ENCODE measurements at regions of chr4 and their contacts with region 1.

Region 1: DNA sequence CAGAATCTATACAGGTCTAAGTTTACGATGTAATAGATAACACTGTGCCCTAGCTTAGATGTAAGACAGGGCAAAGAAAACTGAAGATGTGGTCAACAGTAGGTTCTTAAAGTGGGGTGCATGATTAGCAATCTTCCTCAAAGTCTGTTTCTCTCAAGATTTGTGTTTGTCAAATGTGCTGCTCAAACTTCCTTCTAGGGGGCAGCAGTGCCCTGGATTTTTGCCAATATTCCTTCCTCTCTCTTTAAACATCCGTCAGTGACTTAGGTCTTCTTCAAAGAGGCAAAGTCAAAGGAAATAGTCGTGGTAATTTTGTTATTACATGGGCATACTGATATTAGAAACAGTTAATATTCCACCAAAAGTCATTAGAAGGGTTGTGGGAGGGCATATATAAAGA is 4.2 kb upstream of the PDHA2 start:
- DNase-seq: no peak
- H3K4me3 ChIP-seq: no peak overlapping the region
- H3K27ac ChIP-seq: no peak overlapping the region
- H3K4me1 ChIP-seq: peaks cover 0 to 15% (median 3%) of the 10 kb centered on the region in 4 experiments; a peak in 4 of 7 replicates
- H3K27me3 ChIP-seq: no peaks in the 10 kb centered on the region
- CTCF ChIP-seq: peak in 2 of 3 experiments; percentile 63 to 80; a peak in 3 of 4 replicates
- EP300 ChIP-seq: no peak
- POLR2A ChIP-seq: no peak
- RAD21 ChIP-seq: peak; percentile 84 to 85

Region 2: DNA sequence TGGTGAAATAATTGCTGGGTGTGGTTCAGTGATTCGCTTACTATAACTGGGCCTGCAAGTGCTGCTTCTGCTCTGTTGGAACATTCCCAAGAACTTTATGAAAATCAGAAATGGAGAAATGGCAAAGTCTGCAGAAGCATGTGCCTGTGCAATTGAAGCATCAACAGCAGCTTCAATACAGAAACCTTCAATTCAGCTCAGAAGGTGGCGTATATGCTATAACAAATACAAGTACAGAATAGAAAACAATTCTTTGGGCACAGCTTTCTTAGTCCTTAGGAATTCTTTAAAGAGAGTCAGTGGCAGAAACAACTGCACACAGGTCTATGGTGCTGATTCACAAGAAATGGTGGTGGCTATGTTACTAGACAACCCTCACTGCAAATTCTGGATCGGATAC is 13.8 kb before region 1 on chr4:
- CTCF ChIA-PET with region 1: interaction called, 13 read pairs
- POLR2A ChIA-PET with region 1: no interaction called
- DNase-seq: no peak
- H3K4me3 ChIP-seq: no peak overlapping the region
- H3K27ac ChIP-seq: no peak overlapping the region
- H3K4me1 ChIP-seq: peaks cover 0 to 3% (median 0%) of the 10 kb centered on the region in 4 experiments; a peak in 2 of 7 replicates
- H3K27me3 ChIP-seq: no peaks in the 10 kb centered on the region
- CTCF ChIP-seq: no peak
- EP300 ChIP-seq: no peak
- POLR2A ChIP-seq: no peak
- RAD21 ChIP-seq: no peak

Region 3: GRCh38 chr4:96003951-96004740 is 168.5 kb after region 1 on chr4:
- CTCF ChIA-PET with region 1: no interaction called
- POLR2A ChIA-PET with region 1: no interaction called
- DNase-seq: no peak
- H3K4me3 ChIP-seq: no peak overlapping the region
- H3K27ac ChIP-seq: no peak overlapping the region
- H3K4me1 ChIP-seq: no peaks in the 10 kb centered on the region
- H3K27me3 ChIP-seq: no peaks in the 10 kb centered on the region
- CTCF ChIP-seq: no peak
- EP300 ChIP-seq: no peak
- POLR2A ChIP-seq: no peak
- RAD21 ChIP-seq: no peak

Region 4: GRCh38 chr4:96352051-96352517 is 516.4 kb after region 1 on chr4:
- CTCF ChIA-PET with region 1: interaction called, 10 read pairs
- POLR2A ChIA-PET with region 1: no interaction called
- DNase-seq: peak in 1 of 2 experiments; percentile 48
- H3K4me3 ChIP-seq: no peak overlapping the region
- H3K27ac ChIP-seq: no peak overlapping the region
- H3K4me1 ChIP-seq: peaks cover 0 to 3% (median 0%) of the 10 kb centered on the region in 4 experiments; a peak in 1 of 7 replicates
- H3K27me3 ChIP-seq: no peaks in the 10 kb centered on the region
- CTCF ChIP-seq: peak in 2 of 3 experiments; percentile 39 to 50; a peak in 2 of 4 replicates
- EP300 ChIP-seq: no peak
- POLR2A ChIP-seq: no peak
- RAD21 ChIP-seq: peak; percentile 78 to 82